Body of pancreas (tissue), 4 donors: ENCODE measurements at regions of chr5 and their contacts with region 1.

Region 1: DNA sequence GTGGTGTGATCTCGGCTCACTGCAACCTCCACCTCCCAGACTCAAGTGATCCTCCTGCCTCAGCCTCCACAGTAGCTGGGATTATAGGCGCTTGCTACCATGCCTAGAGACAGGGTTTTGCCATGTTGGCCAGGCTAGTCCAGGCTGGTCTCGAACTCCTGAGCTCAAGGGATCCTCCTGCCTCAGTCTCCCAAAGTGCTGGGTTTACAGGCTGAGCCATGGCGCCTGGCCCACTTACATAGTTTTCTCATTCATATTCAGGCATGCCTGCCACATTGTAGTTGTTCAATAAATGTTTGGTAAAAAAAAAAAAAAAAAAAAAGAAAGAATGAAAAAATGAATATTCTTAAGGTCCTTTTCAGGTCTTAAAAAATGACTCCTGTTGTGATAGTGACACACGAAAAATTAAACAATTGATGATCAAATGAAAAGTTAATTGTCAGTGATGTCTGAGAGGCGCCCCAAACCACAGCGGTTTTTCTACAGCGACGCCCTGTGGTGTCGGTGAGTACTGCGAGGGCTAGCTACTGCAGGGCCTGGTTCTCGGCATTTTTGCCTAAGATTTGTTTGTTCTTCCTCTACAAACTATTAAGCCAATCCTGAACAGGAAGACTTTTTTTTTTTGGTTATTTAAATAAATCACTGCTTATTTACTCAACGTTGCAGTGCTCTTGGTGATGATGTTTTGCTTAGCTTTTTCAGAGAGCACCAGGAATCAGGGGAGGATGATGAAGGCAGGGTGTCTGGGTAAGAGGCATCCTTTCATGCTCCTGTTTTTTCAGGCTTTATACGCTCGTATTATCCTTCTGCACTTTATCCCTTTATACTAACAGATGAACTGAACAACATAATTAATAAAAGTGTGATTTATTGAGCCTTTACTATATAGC is 67.0 kb upstream of the DPYSL3 start:
- DNase-seq: peak; percentile 37 to 63 (median 49)
- ATAC-seq: no peak
- H3K4me3 ChIP-seq: no peak overlapping the region
- H3K27ac ChIP-seq: no peak overlapping the region
- H3K4me1 ChIP-seq: no peaks in the 10 kb centered on the region
- H3K27me3 ChIP-seq: no peaks in the 10 kb centered on the region
- CTCF ChIP-seq: peak; percentile 31 to 85 (median 61)
- POLR2A ChIP-seq: no peak

Region 2: GRCh38 chr5:147369742-147370374 is 207.0 kb before region 1 on chr5:
- intact Hi-C with region 1: no loop called
- DNase-seq: no peak
- ATAC-seq: peak; percentile 59
- H3K4me3 ChIP-seq: no peak overlapping the region
- H3K27ac ChIP-seq: no peak overlapping the region
- H3K4me1 ChIP-seq: no peaks in the 10 kb centered on the region
- H3K27me3 ChIP-seq: no peaks in the 10 kb centered on the region
- CTCF ChIP-seq: peak; percentile 56 to 83 (median 73)
- POLR2A ChIP-seq: no peak

Region 3: GRCh38 chr5:147464211-147464610 is 112.7 kb before region 1 on chr5:
- intact Hi-C with region 1: loop called (anchors 10 kb)
- DNase-seq: peak in 3 of 4 donors; percentile 14 to 34 (median 23)
- ATAC-seq: peak; percentile 33
- H3K4me3 ChIP-seq: no peak overlapping the region
- H3K27ac ChIP-seq: no peak overlapping the region
- H3K4me1 ChIP-seq: no peaks in the 10 kb centered on the region
- H3K27me3 ChIP-seq: peaks cover 0 to 4% of the 10 kb centered on the region in 2 donors
- CTCF ChIP-seq: peak in 6 of 7 experiments; percentile 33 to 49 (median 44)
- POLR2A ChIP-seq: no peak

Region 4: DNA sequence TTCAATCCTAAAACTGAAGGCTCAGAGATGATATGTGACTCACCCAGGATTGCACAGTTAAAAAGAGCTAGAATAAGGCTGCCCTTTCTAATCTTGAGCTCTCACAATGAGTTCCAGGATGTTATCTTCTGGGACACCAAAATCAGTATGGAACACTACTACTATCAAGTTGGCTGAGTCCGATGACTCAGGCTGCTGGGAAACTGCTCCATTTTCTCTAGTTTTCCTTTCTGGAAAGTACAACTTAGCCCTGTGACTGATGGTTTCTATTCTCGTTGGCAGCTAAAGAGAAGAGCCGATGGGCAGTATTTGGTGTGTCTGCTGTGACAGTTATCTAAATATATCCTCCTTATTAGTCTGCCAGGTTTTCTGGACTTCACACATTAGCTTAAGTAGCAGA is 29.2 kb before region 1 on chr5:
- intact Hi-C with region 1: no loop called
- DNase-seq: no peak
- ATAC-seq: peak; percentile 27
- H3K4me3 ChIP-seq: no peak overlapping the region
- H3K27ac ChIP-seq: no peak overlapping the region
- H3K4me1 ChIP-seq: no peaks in the 10 kb centered on the region
- H3K27me3 ChIP-seq: no peaks in the 10 kb centered on the region
- CTCF ChIP-seq: no peak
- POLR2A ChIP-seq: no peak

Region 5: GRCh38 chr5:147949711-147950573 is 373.1 kb after region 1 on chr5:
- intact Hi-C with region 1: no loop called
- DNase-seq: no peak
- ATAC-seq: peak; percentile 68
- H3K4me3 ChIP-seq: no peak overlapping the region
- H3K27ac ChIP-seq: no peak overlapping the region
- H3K4me1 ChIP-seq: no peaks in the 10 kb centered on the region
- H3K27me3 ChIP-seq: no peaks in the 10 kb centered on the region
- CTCF ChIP-seq: peak; percentile 21 to 76 (median 75)
- POLR2A ChIP-seq: no peak